Naive thymus-derived CD4-positive, alpha-beta T cell (primary cell): ENCODE measurements at regions of chr1 and their contacts with region 1.

Region 1: GRCh38 chr1:92931681-92932080 is 29.6 kb downstream of the DIPK1A start:
- DNase-seq: no peak
- ATAC-seq: no peak
- H3K4me3 ChIP-seq: no peak overlapping the region
- H3K4me3 Mint-ChIP-seq: no peak overlapping the region
- H3K27ac ChIP-seq: no peak overlapping the region
- H3K27ac Mint-ChIP-seq: peak overlapping the region in 1 of 9 donors; percentile 41
- H3K4me1 ChIP-seq: peaks cover 4 to 21% of the 10 kb centered on the region in 2 donors
- H3K4me1 Mint-ChIP-seq: peaks cover 27 to 85% (median 76%) of the 10 kb centered on the region in 7 donors
- H3K27me3 ChIP-seq: no peaks in the 10 kb centered on the region
- H3K27me3 Mint-ChIP-seq: no peaks in the 10 kb centered on the region

Region 2: DNA sequence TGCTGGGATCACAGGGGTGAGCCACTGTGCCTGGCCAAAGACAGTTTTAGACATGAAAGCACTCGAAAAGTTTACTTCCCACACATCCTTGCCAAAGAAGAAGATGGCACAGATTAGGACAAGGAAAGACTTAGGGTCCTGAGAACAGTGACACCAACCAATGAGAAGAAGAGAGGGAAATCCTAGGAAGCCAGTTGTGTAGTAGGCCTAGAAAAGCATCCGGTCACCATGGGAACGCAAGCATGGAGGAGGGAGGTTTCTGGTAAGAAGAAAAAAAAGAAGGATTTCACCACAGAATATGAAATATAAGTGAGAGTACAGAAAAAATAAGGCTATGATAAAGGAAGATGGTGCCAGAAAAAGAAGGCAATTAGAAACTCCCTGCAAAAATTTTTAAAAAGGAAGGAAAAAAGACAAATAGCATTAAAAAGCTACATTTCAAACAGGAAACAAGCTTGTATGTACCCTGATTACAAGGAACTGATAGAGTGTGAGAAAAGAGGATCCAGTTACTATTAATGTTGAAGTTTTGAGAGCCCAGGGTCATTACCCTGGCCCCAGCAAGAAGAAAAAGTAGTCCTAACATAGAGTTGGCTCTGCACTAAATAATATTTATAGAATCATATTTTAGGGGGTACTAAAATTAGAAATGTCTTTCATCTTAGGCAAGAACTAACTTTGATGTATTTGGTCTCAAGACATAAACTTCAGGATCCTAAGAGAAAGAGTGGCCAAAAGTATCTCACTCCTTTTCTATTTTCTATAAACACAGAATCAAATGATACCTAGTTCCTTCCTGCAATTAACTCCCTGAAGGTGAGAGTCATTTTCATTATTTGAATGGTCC is 13.4 kb after region 1 on chr1:
- CTCF ChIA-PET with region 1: no interaction called
- POLR2A ChIA-PET with region 1: no interaction called
- intact Hi-C with region 1: loop called (anchors 2 kb)
- DNase-seq: no peak
- ATAC-seq: no peak
- H3K4me3 ChIP-seq: no peak overlapping the region
- H3K4me3 Mint-ChIP-seq: peak overlapping the region in 8 of 10 donors; percentile 15 to 58 (median 28)
- H3K27ac ChIP-seq: no peak overlapping the region
- H3K27ac Mint-ChIP-seq: peak overlapping the region in 3 of 9 donors; percentile 54 to 78 (median 63)
- H3K4me1 ChIP-seq: peaks cover 0 to 26% of the 10 kb centered on the region in 2 donors
- H3K4me1 Mint-ChIP-seq: peaks cover 37 to 73% (median 66%) of the 10 kb centered on the region in 7 donors
- H3K27me3 ChIP-seq: no peaks in the 10 kb centered on the region
- H3K27me3 Mint-ChIP-seq: no peaks in the 10 kb centered on the region